ENCODE measurements at regions of chr1 and their contacts with region 1.

Region 1: DNA sequence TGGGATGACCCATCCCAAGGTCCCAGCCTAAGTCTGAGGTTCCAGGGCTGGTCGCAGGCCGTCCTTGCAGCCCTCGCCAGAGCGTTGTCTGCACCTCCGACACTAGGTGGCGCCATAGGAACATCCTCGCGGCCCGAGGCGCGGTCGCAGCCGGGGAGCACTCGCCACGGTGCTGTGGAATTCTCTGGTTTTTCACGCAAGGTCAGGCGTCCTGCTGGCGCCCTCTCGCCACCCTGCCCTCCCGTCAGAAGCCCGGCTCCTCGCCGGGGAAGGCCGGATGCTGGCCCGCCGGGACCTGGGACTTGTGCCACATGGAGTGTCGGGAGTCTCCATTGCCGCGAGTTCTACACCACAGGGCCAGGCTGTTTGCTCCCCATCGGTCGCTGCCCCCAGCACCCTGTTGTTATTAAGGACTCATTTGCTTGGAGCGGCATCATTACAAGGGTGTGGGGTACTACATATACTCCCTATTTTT is 196.8 kb upstream of the LMO4 start:
- DNase-seq: peak; percentile 95

Region 2: GRCh38 chr1:87243573-87243972 is 111.7 kb after region 1 on chr1:
- intact Hi-C with region 1: no loop called
- DNase-seq: no peak

Region 3: GRCh38 chr1:88302843-88303486 is 1171.1 kb after region 1 on chr1:
- intact Hi-C with region 1: loop called in 1 of 2 experiments (anchors 10 kb)
- DNase-seq: no peak